ENCODE measurements at regions of chr6 and their contacts with region 1.

Region 1: DNA sequence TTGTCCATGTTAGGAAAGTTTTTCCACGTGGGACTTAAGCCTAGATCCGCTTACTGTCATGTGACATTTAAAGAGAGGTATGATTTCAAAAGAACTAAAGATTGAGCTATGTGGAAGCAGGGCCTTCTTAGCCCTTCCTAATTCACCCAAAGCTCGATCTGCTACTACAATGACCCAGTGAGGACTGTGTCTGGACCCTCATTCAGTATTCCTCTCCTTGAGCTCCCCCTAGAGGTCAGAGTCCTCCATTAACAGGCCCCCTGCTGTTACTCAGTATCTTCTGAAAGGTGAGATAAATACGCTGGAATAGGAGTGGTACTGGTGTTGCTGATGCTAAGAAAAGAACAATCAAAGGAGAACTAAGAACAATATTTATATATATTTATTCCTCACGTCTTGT is 414.0 kb downstream of the GJA1 start:
- DNase-seq: peak; percentile 59
- H3K4me3 ChIP-seq: no peak overlapping the region; a peak in 1 of 4 replicates
- H3K27ac ChIP-seq: no peak overlapping the region
- H3K4me1 ChIP-seq: peaks cover 0 to 13% of the 10 kb centered on the region in 2 experiments; a peak in 3 of 4 replicates
- H3K27me3 ChIP-seq: no peaks in the 10 kb centered on the region
- CTCF ChIP-seq: peak; percentile 89
- EP300 ChIP-seq: no peak
- RAD21 ChIP-seq: peak; percentile 96

Region 2: DNA sequence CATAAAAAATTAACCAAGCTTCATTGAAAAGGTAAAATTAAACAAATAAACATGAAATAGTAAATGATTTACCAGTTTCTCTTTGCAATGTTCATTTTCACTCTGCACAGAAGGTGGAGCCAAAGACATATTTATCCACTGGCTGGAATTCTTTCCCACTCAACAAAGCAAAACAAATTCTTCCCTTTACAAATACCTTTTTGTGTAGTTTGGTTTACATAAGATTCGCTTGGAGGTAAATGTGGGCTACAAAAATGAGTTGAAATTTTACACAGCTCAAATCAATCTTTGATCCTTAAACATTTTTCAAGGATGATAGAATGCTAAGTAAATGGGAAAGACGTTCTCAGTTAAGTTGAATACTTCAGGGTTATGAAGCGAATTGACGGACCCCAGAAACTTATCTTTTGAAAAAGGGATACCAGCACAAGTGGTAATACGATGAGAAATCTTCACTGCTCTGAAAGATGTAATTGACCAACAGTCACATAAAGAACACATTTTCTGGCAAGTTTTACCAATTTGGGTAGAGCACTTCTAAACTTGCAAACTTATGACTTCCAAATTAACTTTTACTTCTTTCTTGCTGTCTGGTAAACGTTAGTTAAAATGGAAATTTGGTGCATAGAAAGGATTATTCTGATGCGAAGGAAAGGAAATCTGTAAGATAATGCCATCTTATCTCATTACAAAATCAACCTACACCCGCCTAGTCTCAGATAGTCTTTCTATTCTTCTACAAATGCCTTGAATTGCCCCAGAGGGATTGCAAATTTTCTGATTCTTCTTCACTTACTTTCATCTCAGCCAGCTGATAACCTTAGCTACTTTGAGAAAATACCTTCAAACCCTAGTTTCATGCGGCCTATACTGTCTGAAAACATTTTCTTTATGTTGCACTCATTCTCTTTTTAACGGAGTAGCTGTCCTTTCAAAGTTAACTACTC is 418.7 kb before region 1 on chr6:
- CTCF ChIA-PET with region 1: interaction called, 50 read pairs
- POLR2A ChIA-PET with region 1: no interaction called
- DNase-seq: peak; percentile 50
- H3K4me3 ChIP-seq: no peak overlapping the region
- H3K27ac ChIP-seq: no peak overlapping the region
- H3K4me1 ChIP-seq: peaks cover 0 to 16% of the 10 kb centered on the region in 2 experiments; a peak in 2 of 4 replicates
- H3K27me3 ChIP-seq: no peaks in the 10 kb centered on the region
- CTCF ChIP-seq: peak; percentile 90
- EP300 ChIP-seq: no peak
- RAD21 ChIP-seq: peak; percentile 97

Region 3: DNA sequence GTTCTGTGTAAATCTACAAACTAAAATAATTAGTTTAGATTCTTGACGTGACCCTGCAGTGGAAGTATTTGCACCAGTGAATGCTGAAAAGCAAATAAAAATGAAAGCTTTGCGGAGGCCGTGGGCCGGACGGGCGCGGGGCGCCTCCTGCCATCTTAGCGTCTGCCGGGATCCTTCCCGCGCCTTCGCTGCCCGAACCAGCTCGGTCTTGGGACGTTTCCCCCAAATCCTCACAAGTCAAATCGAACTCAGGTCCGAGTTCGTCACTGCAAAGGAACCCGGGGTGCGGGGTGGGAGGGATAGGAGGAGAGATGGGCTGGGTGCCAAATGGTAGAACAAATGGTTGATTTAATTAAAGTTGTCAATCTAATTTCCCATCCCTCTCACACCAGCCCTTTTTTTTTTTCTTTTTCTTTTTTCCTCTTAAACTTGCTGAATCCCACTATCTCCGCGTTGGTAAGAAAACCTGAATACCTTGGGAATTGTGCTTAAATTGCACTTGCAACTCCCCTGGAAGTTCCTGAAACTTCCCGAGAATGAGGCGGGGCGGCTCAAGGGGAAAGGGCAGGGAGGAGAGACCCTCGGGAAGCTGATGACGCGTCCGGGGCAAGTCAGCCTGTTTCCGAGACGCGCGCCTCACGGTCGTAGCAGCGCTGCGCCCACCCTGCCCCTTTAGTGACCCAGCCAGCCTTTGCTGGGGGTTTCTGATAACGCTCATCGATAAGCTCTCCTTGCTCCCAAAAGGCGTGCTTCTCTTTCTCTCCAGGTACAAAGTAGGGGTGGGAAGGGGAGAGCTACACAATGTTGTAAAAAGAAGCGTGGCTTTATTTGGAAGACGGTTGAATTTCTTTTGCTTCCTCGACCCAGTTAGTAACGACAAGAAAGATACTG is 412.3 kb before region 1 on chr6:
- CTCF ChIA-PET with region 1: interaction called, 50 read pairs
- POLR2A ChIA-PET with region 1: no interaction called
- DNase-seq: peak; percentile 59
- H3K4me3 ChIP-seq: peak overlapping the region; percentile 58 to 86
- H3K27ac ChIP-seq: peak overlapping the region; percentile 77 to 89
- H3K4me1 ChIP-seq: peaks cover 4 to 33% of the 10 kb centered on the region in 2 experiments; a peak in 3 of 4 replicates
- H3K27me3 ChIP-seq: no peaks in the 10 kb centered on the region
- CTCF ChIP-seq: no peak
- EP300 ChIP-seq: 0 out of 4 replicates have a peak, but pooled peaks of 1 of the 2 experiments have one; percentile 5
- RAD21 ChIP-seq: no peak

Region 4: DNA sequence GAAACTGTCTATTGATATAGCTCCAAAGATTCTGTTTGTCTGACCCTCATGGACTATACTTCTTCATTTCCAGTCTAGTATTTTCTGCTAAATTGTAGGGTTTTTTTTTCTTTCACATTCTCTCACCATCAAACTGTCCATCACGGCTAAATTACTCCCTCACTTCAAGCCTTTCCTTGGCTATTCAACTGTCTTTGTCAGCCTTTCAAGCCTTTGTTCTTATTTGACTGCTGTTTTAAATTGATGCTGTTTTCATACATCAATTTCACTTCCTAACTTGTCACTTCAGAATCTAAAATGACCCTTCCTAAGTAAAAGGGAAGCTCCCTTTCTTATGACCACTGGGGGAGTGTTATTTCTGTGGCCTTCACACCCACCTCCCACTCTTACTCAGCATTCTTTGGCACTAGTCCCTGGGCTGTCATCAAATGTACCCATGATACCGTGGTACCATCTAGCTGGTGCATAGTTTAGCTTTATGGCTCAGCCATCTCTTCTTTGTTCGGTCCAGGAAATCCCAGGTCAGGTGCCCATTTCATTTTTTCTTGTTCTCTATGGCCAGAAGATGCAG is 405.4 kb before region 1 on chr6:
- CTCF ChIA-PET with region 1: interaction called, 10 read pairs
- POLR2A ChIA-PET with region 1: no interaction called
- DNase-seq: no peak
- H3K4me3 ChIP-seq: no peak overlapping the region
- H3K27ac ChIP-seq: peak overlapping the region in 1 of 2 experiments; percentile 28; a peak in 1 of 4 replicates
- H3K4me1 ChIP-seq: peaks cover 0 to 35% of the 10 kb centered on the region in 2 experiments; a peak in 3 of 4 replicates
- H3K27me3 ChIP-seq: no peaks in the 10 kb centered on the region
- CTCF ChIP-seq: no peak
- EP300 ChIP-seq: no peak
- RAD21 ChIP-seq: no peak

Region 5: GRCh38 chr6:121823437-121823851 is 26.0 kb before region 1 on chr6:
- CTCF ChIA-PET with region 1: no interaction called
- POLR2A ChIA-PET with region 1: no interaction called
- DNase-seq: no peak
- H3K4me3 ChIP-seq: no peak overlapping the region
- H3K27ac ChIP-seq: peak overlapping the region; percentile 30 to 55; a peak in 3 of 4 replicates
- H3K4me1 ChIP-seq: peaks cover 0 to 36% of the 10 kb centered on the region in 2 experiments; a peak in 3 of 4 replicates
- H3K27me3 ChIP-seq: no peaks in the 10 kb centered on the region
- CTCF ChIP-seq: no peak
- EP300 ChIP-seq: peak; percentile 51 to 80
- RAD21 ChIP-seq: no peak

Region 6: GRCh38 chr6:121838842-121839241 is 10.6 kb before region 1 on chr6:
- CTCF ChIA-PET with region 1: interaction called, 16 read pairs
- POLR2A ChIA-PET with region 1: no interaction called
- DNase-seq: no peak
- H3K4me3 ChIP-seq: no peak overlapping the region
- H3K27ac ChIP-seq: peak overlapping the region in 1 of 2 experiments; percentile 18; a peak in 1 of 4 replicates
- H3K4me1 ChIP-seq: peaks cover 4 to 10% of the 10 kb centered on the region in 2 experiments; a peak in 1 of 4 replicates
- H3K27me3 ChIP-seq: no peaks in the 10 kb centered on the region
- CTCF ChIP-seq: no peak
- EP300 ChIP-seq: peak; percentile 20 to 92; a peak in 2 of 4 replicates
- RAD21 ChIP-seq: no peak

Region 7: GRCh38 chr6:121984956-121985355 is 135.5 kb after region 1 on chr6:
- CTCF ChIA-PET with region 1: no interaction called
- POLR2A ChIA-PET with region 1: no interaction called
- DNase-seq: no peak
- H3K4me3 ChIP-seq: no peak overlapping the region
- H3K27ac ChIP-seq: no peak overlapping the region
- H3K4me1 ChIP-seq: no peaks in the 10 kb centered on the region
- H3K27me3 ChIP-seq: no peaks in the 10 kb centered on the region
- CTCF ChIP-seq: no peak
- EP300 ChIP-seq: no peak
- RAD21 ChIP-seq: no peak